WTC11 (cell line): ENCODE measurements at regions of chr19 and their contacts with region 1.

Region 1: GRCh38 chr19:41563854-41564514 is 12.0 kb upstream of the CEACAM21 start:
- DNase-seq: peak; percentile 48
- ATAC-seq: 0 out of 2 replicates have a peak, but pooled peaks have one; percentile 8
- H3K4me3 Mint-ChIP-seq: peak overlapping the region; percentile 72
- H3K27ac Mint-ChIP-seq: no peak overlapping the region
- H3K4me1 Mint-ChIP-seq: peaks cover 15% of the 10 kb centered on the region
- H3K27me3 Mint-ChIP-seq: peaks cover 95% of the 10 kb centered on the region
- CTCF ChIP-seq: no peak

Region 2: DNA sequence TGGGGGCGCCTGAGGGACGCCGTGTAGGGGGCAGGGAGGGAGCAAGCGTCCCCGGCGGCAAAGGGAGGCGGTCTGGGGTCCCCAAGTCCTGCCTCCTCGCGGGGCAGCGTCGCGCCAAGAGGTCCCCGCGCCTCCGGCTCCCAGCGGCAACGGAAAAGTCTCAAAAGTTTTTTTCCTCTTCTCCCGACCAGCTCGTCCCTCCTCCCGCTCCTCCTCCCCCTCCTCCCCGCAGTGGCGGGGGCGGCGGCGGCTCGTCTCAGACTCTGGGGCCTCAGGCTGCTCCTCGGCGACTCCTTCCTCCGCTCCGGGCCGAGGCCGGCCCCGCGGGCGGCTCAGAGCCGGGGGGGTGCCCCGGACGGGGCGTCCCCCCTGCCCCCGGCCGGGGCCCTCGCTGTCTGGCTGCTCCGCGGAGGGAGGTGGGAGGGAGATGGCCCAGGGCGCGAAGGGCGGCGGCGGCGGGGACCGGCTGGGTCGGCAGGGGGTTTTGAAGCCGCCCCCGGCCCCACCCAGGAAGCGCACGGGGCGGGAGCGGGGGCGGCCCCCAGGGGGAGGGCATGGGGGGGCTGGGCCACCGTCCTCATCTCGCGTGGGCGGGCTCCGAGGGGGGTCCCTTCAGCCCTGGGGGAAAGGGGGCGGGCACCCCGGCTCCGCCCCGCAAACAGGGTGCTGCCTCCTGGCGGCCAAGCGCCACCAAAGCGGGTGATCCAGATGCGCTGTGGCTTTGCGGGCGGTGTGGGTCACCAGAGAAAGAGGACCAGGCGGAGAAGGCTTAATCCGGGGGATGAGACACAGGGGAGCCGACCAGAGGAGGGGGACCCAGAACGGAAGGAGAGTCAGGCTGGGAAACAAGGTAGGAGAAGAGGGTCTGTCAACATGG is 210.3 kb before region 1 on chr19 and contains the start of gene TGFB1:
- CTCF ChIA-PET with region 1: interaction called, 10 read pairs
- POLR2A ChIA-PET with region 1: no interaction called
- DNase-seq: peak; percentile 78
- ATAC-seq: peak; percentile 53
- H3K4me3 Mint-ChIP-seq: peak within 1 kb of the TSS; percentile 89
- H3K27ac Mint-ChIP-seq: no peak within 1 kb of the TSS
- H3K4me1 Mint-ChIP-seq: peaks cover 18% of the 10 kb centered on the region
- H3K27me3 Mint-ChIP-seq: peaks cover 57% of the 10 kb centered on the region
- CTCF ChIP-seq: peak; percentile 81
- total RNA-seq, gene TGFB1: 10.4 to 11.8 TPM (median 11.0 TPM) in 3 replicates

Region 3: DNA sequence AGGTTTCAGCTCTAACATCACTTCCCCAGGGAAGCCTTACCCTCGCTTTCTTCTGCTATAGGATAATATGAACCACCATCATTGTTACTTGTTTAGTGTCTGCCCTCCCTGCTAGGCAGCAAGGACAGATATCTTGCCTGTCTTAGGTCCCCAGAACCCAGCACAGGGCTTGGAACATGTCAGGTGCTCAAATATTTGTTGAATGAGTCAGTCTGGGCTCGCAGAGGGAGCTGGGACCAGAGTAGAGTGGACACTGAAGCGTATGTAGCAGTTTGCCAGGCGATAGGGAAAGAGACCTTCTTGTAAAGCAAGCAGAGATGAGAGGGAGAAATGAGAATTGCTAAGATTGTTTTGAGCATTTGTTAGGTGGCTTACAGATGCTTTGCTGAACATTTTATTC is 154.7 kb before region 1 on chr19:
- CTCF ChIA-PET with region 1: interaction called, 19 read pairs
- POLR2A ChIA-PET with region 1: no interaction called
- DNase-seq: no peak
- ATAC-seq: no peak
- H3K4me3 Mint-ChIP-seq: no peak overlapping the region
- H3K27ac Mint-ChIP-seq: peak overlapping the region; percentile 22; the same call in 1 of the 2 replicates
- H3K4me1 Mint-ChIP-seq: peaks cover 13% of the 10 kb centered on the region
- H3K27me3 Mint-ChIP-seq: no peaks in the 10 kb centered on the region
- CTCF ChIP-seq: no peak

Region 4: DNA sequence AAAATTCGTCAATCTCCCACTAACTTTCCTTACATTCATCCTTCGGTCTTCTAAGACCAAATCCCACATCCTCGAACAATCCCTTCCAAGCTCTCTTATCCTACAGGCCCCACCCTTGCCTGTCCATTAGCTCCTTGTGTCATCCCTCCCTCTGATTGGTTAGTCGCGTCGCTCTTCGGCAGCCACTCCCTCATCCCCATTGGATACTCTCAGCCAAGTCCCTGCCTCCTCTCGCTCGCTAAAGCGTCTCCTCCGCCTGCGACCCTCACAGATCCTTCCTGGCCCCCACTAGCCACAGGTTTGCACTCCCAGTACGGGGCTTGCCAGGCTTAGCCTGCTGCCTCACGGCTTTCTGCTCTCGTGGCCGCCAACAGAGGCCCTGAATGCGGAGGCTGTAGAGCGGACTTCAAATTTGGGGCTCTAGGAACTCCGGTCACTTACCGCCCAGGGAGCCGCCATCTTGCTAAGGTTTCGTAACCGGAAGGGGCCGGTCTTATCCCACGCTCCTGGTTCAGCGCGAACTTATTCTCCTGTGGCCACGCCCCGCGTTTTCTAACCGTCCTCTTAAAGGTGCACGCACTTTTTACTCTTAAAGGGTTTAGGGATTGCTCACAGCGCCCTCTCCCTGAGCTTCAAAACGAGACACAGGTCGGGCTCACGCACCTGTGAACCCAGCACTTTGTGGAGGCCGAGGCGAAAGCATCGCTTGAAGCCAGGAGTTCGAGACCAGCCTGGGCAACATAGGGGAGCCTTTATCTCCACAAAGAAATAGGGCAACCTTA is 124.4 kb before region 1 on chr19 and contains the start of gene DMAC2:
- CTCF ChIA-PET with region 1: interaction called, 310 read pairs
- POLR2A ChIA-PET with region 1: interaction called, 10 read pairs
- DNase-seq: peak; percentile 97
- ATAC-seq: peak; percentile 98
- H3K4me3 Mint-ChIP-seq: no peak within 1 kb of the TSS
- H3K27ac Mint-ChIP-seq: no peak within 1 kb of the TSS
- H3K4me1 Mint-ChIP-seq: peaks cover 13% of the 10 kb centered on the region
- H3K27me3 Mint-ChIP-seq: peaks cover 17% of the 10 kb centered on the region; the same call in 1 of the 2 replicates
- CTCF ChIP-seq: no peak
- total RNA-seq, gene DMAC2: 77.6 to 85.6 TPM (median 82.6 TPM) in 3 replicates

Region 5: GRCh38 chr19:41457241-41457640 is 106.7 kb before region 1 on chr19:
- CTCF ChIA-PET with region 1: interaction called, 310 read pairs
- POLR2A ChIA-PET with region 1: no interaction called
- DNase-seq: no peak
- ATAC-seq: no peak
- H3K4me3 Mint-ChIP-seq: no peak overlapping the region
- H3K27ac Mint-ChIP-seq: no peak overlapping the region
- H3K4me1 Mint-ChIP-seq: no peaks in the 10 kb centered on the region
- H3K27me3 Mint-ChIP-seq: peaks cover 58% of the 10 kb centered on the region
- CTCF ChIP-seq: no peak

Region 6: GRCh38 chr19:41548954-41549688 is 14.9 kb before region 1 on chr19:
- CTCF ChIA-PET with region 1: interaction called, 56 read pairs
- POLR2A ChIA-PET with region 1: no interaction called
- DNase-seq: no peak
- ATAC-seq: peak; percentile 86
- H3K4me3 Mint-ChIP-seq: peak overlapping the region; percentile 60
- H3K27ac Mint-ChIP-seq: peak overlapping the region; percentile 95
- H3K4me1 Mint-ChIP-seq: peaks cover 44% of the 10 kb centered on the region
- H3K27me3 Mint-ChIP-seq: peaks cover 14% of the 10 kb centered on the region
- CTCF ChIP-seq: no peak